ENCODE measurements at regions of chr12 and their contacts with region 1.

Region 1: GRCh38 chr12:130013771-130014484 is 110.1 kb upstream of the TMEM132D start:
- DNase-seq: peak; percentile 67
- H3K4me3 ChIP-seq: no peak overlapping the region
- H3K27ac ChIP-seq: no peak overlapping the region
- H3K4me1 ChIP-seq: no peaks in the 10 kb centered on the region
- H3K27me3 ChIP-seq: peaks cover 63% of the 10 kb centered on the region
- CTCF ChIP-seq: peak; percentile 68

Region 2: GRCh38 chr12:128531170-128531569 is 1482.8 kb before region 1 on chr12:
- CTCF ChIA-PET with region 1: no interaction called
- POLR2A ChIA-PET with region 1: no interaction called
- intact Hi-C with region 1: loop called (anchors 5 kb)
- DNase-seq: peak; percentile 49
- H3K4me3 ChIP-seq: no peak overlapping the region
- H3K27ac ChIP-seq: no peak overlapping the region
- H3K4me1 ChIP-seq: no peaks in the 10 kb centered on the region
- H3K27me3 ChIP-seq: peaks cover 40% of the 10 kb centered on the region
- CTCF ChIP-seq: peak; percentile 53

Region 3: DNA sequence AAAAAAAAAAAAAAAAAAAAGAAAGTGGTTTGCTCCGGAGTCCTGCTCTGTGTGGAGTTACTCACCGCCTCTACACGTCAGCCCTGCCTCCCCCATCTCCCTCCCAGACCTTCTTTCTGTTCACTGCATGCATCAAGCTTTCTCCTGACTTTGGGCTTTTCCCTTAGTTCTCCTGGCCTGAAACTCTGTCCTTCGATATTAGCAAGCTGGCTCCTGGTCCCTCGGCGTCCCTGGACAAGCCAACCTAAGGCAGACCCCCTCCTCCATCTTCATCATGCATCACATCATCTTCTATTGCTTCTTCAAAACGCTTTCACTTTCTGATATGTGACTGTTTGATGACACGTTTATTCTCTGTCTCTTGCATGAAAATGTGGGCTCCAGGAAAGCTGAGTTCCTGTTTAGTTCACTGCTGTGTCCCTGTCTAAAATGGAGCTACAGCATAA is 1230.8 kb before region 1 on chr12:
- CTCF ChIA-PET with region 1: interaction called, 4 read pairs
- POLR2A ChIA-PET with region 1: no interaction called
- intact Hi-C with region 1: loop called (anchors 10 kb)
- DNase-seq: no peak
- H3K4me3 ChIP-seq: no peak overlapping the region
- H3K27ac ChIP-seq: no peak overlapping the region
- H3K4me1 ChIP-seq: no peaks in the 10 kb centered on the region
- H3K27me3 ChIP-seq: no peaks in the 10 kb centered on the region
- CTCF ChIP-seq: no peak

Region 4: DNA sequence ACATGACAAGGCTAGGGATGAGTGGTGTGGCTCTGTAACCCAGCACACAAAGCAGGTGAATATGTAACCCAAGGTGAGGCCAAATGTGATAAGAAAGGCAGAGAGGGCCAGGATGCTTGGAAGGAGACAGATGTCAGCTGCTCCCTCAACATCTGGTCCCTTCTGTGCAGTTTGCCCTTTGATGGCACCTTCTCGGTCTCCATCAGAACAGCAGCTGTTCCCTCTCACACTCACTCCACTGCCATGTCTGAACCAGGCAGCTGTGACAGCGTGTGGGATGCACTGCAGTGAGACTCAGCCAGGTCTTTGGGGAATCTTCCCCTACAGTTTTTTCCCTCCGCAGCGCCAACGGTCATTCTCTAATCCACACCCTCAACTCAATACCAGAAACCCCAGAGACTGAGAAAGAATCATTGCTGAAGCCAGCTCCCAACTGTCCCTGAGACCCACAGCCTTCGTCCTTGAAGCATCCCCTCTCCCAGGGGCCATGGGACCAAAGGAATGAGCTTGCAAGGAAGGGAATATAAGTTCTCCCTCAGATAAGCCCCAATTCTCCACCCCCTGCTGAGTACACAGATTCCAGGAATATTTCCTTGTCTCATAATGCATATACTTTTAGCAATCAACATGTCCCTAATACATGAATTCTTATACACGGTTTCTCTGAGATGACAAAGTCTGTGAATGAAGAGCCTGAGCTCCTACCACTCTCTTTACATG is 930.6 kb before region 1 on chr12:
- CTCF ChIA-PET with region 1: no interaction called
- POLR2A ChIA-PET with region 1: no interaction called
- intact Hi-C with region 1: no loop called
- DNase-seq: no peak
- H3K4me3 ChIP-seq: no peak overlapping the region
- H3K27ac ChIP-seq: no peak overlapping the region
- H3K4me1 ChIP-seq: no peaks in the 10 kb centered on the region
- H3K27me3 ChIP-seq: no peaks in the 10 kb centered on the region
- CTCF ChIP-seq: no peak

Region 5: GRCh38 chr12:130204461-130204860 is 190.5 kb after region 1 on chr12:
- CTCF ChIA-PET with region 1: interaction called, 11 read pairs
- POLR2A ChIA-PET with region 1: no interaction called
- intact Hi-C with region 1: no loop called
- DNase-seq: no peak
- H3K4me3 ChIP-seq: no peak overlapping the region
- H3K27ac ChIP-seq: no peak overlapping the region
- H3K4me1 ChIP-seq: no peaks in the 10 kb centered on the region
- H3K27me3 ChIP-seq: no peaks in the 10 kb centered on the region
- CTCF ChIP-seq: no peak

Measured in A673 (cell line).